Mammary epithelial cell (primary cell): ENCODE measurements at regions of chr1 and their contacts with region 1.

Region 1: DNA sequence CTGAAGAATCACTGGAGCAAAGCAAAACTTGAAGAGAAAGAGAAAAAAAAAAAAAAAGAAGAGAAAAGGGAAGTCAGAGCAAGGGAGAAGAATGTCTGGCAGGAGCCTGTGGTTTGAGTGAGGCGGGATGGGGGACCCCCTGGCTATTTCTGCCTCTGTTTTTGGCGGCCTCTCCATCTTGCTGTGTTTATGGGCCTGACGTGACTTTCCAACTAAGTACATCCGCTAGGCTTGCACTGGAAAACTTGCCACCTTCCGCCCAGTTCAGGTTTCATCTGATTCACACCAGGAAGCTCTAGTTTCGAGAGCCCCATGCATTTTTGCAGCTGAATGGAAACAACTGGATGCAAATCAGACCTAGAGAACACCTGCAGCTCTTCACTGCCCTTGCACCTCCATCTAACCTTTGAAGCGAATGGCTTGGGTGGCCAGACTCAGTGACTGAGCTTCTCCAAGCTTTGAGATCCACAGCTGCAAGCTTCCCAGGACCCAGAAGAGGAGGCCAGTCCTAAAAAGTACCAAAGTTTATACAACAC is 28.0 kb downstream of the TBX15 start:
- DNase-seq: no peak
- H3K4me3 ChIP-seq: no peak overlapping the region
- H3K27ac ChIP-seq: no peak overlapping the region
- H3K4me1 ChIP-seq: peaks cover 3% of the 10 kb centered on the region
- H3K27me3 ChIP-seq: no peaks in the 10 kb centered on the region
- CTCF ChIP-seq: no peak

Region 2: GRCh38 chr1:118945489-118945888 is 14.6 kb before region 1 on chr1:
- CTCF ChIA-PET with region 1: interaction called, 12 read pairs
- dilution Hi-C with region 1: no loop called
- in situ Hi-C with region 1: no loop called
- intact Hi-C with region 1: no loop called
- DNase-seq: peak; percentile 6
- H3K4me3 ChIP-seq: no peak overlapping the region
- H3K27ac ChIP-seq: no peak overlapping the region
- H3K4me1 ChIP-seq: peaks cover 13% of the 10 kb centered on the region
- H3K27me3 ChIP-seq: no peaks in the 10 kb centered on the region
- CTCF ChIP-seq: no peak